Activated CD4-positive, alpha-beta T cell treated with anti-CD3 and anti-CD28 coated beads, Interleukin-2, amount 10 ng/mL, durations not matched to agents 24 days and 14 days (primary cell): ENCODE measurements at regions of chr6 and their contacts with region 1.

Region 1: GRCh38 chr6:52162940-52163908 is 23.0 kb upstream of the IL17A start:
- DNase-seq: peak; percentile 69
- H3K4me3 Mint-ChIP-seq: no peak overlapping the region
- H3K27ac Mint-ChIP-seq: peak overlapping the region; percentile 48
- H3K4me1 Mint-ChIP-seq: peaks cover 20% of the 10 kb centered on the region
- H3K27me3 Mint-ChIP-seq: peaks cover 35% of the 10 kb centered on the region

Region 2: GRCh38 chr6:52063584-52064344 is 99.5 kb before region 1 on chr6:
- intact Hi-C with region 1: loop called (anchors 5 kb)
- DNase-seq: peak; percentile 86
- H3K4me3 Mint-ChIP-seq: peak overlapping the region; percentile 53
- H3K27ac Mint-ChIP-seq: peak overlapping the region; percentile 72
- H3K4me1 Mint-ChIP-seq: peaks cover 7% of the 10 kb centered on the region
- H3K27me3 Mint-ChIP-seq: peaks cover 13% of the 10 kb centered on the region

Region 3: GRCh38 chr6:52227495-52227894 is 64.3 kb after region 1 on chr6:
- intact Hi-C with region 1: loop called (anchors 1 kb)
- DNase-seq: peak; percentile 90
- H3K4me3 Mint-ChIP-seq: peak overlapping the region; percentile 27
- H3K27ac Mint-ChIP-seq: peak overlapping the region; percentile 32
- H3K4me1 Mint-ChIP-seq: peaks cover 46% of the 10 kb centered on the region
- H3K27me3 Mint-ChIP-seq: peaks cover 47% of the 10 kb centered on the region

Region 4: GRCh38 chr6:52254731-52255378 is 91.6 kb after region 1 on chr6:
- intact Hi-C with region 1: loop called (anchors 2 kb)
- DNase-seq: no peak
- H3K4me3 Mint-ChIP-seq: peak overlapping the region; percentile 18
- H3K27ac Mint-ChIP-seq: no peak overlapping the region
- H3K4me1 Mint-ChIP-seq: peaks cover 35% of the 10 kb centered on the region
- H3K27me3 Mint-ChIP-seq: peaks cover 40% of the 10 kb centered on the region

Region 5: DNA sequence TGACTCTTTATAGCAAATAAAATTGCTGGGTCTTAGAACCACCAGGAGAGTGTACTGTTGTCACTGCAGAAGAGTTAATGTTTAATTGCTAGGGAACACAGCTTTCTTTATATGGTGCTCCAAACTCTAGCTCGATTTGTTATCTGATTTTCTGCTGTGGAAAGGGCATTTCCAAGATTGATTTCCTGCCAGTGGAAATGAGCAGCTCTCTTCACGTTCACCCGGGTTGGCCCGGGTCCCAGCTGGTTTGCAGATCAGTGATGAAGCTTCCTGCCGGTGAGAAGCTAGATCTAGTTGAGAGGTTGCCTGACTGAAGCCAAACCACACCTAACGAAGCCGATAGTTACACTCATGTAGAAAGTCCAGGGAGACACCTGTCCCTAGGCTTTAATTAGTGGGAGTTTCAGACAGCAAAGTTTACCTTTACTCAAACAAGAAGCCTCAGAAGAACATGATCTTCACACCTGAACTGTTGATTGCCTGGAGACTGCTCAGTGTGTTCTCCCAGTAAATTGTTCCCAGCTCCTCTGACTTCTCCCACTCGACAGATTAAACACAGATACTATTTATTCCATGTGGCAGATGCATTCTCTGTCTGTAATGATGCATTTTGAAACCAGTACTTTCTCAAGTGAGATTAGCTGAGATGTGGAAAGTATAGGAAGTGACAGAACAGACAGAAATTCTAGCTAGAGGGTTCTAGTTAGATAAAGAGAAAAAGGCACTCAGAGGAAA is 226.6 kb after region 1 on chr6:
- intact Hi-C with region 1: loop called (anchors 1 kb)
- DNase-seq: peak; percentile 87
- H3K4me3 Mint-ChIP-seq: peak overlapping the region; percentile 66
- H3K27ac Mint-ChIP-seq: peak overlapping the region; percentile 85
- H3K4me1 Mint-ChIP-seq: peaks cover 59% of the 10 kb centered on the region
- H3K27me3 Mint-ChIP-seq: no peaks in the 10 kb centered on the region

Region 6: GRCh38 chr6:52577022-52577777 is 414.0 kb after region 1 on chr6 and contains the start of gene TRAM2:
- intact Hi-C with region 1: loop called (anchors 5 kb)
- DNase-seq: peak; percentile 94
- H3K4me3 Mint-ChIP-seq: peak within 1 kb of the TSS; percentile 81
- H3K27ac Mint-ChIP-seq: peak within 1 kb of the TSS; percentile 71
- H3K4me1 Mint-ChIP-seq: peaks cover 30% of the 10 kb centered on the region
- H3K27me3 Mint-ChIP-seq: peaks cover 13% of the 10 kb centered on the region
- total RNA-seq, gene TRAM2: 2.6 TPM in 2 replicates

Region 7: GRCh38 chr6:52984247-52984646 is 821.0 kb after region 1 on chr6:
- intact Hi-C with region 1: loop called (anchors 5 kb)
- DNase-seq: peak; percentile 84
- H3K4me3 Mint-ChIP-seq: peak overlapping the region; percentile 25
- H3K27ac Mint-ChIP-seq: peak overlapping the region; percentile 92
- H3K4me1 Mint-ChIP-seq: peaks cover 59% of the 10 kb centered on the region
- H3K27me3 Mint-ChIP-seq: peaks cover 2% of the 10 kb centered on the region